ENCODE measurements at regions of chr6 and their contacts with region 1.

Region 1: GRCh38 chr6:72411872-72412708 is 209.8 kb upstream of the KCNQ5 start:
- DNase-seq: peak; percentile 46 to 93 (median 73)
- H3K4me3 ChIP-seq: no peak overlapping the region
- H3K27ac ChIP-seq: no peak overlapping the region
- H3K4me1 ChIP-seq: no peaks in the 10 kb centered on the region
- H3K27me3 ChIP-seq: no peaks in the 10 kb centered on the region
- CTCF ChIP-seq: peak; percentile 99 to 100 (median 100)
- POLR2A ChIP-seq: no peak

Region 2: DNA sequence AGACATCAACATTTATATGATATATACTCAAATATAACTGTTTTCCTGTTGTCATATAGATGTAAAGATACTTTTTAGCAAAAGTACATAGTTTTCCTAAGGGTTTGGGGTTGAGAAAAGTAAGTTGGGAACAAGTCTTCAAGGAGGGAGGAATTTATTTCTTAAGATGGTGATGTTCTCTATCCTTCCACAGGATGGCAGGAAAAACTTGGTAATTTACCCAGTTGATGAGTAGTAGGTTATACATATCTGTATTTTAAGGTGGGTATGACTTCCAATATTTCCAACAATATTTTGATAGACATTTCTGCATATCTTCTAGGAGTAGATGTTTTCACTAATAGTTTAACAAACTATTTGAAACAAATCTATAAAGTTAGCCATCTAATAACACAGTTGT is 271.3 kb before region 1 on chr6:
- intact Hi-C with region 1: no loop called
- DNase-seq: no peak
- H3K4me3 ChIP-seq: no peak overlapping the region
- H3K27ac ChIP-seq: no peak overlapping the region
- H3K4me1 ChIP-seq: no peaks in the 10 kb centered on the region
- H3K27me3 ChIP-seq: no peaks in the 10 kb centered on the region
- CTCF ChIP-seq: no peak
- POLR2A ChIP-seq: no peak

Region 3: DNA sequence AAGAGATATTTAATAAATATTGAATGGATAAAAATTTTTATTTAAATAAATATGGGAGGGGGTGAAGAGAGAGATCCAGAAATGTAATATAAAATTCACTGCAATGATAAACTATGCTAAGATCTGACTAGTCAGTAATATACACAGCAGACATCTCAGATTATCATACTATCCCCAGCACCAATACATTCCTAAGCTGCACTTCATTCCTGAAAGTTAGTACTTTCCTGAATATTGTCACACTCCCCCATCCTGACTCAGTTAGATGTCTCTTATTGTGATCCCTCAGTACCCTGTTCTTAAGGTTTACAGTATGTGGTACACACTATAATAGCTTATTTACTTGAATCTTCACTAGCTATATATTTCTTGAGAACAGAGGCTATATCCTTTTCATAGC is 121.5 kb after region 1 on chr6:
- intact Hi-C with region 1: no loop called
- DNase-seq: no peak
- H3K4me3 ChIP-seq: no peak overlapping the region
- H3K27ac ChIP-seq: no peak overlapping the region
- H3K4me1 ChIP-seq: no peaks in the 10 kb centered on the region
- H3K27me3 ChIP-seq: no peaks in the 10 kb centered on the region
- CTCF ChIP-seq: no peak
- POLR2A ChIP-seq: no peak

Region 4: GRCh38 chr6:73177221-73177944 is 765.3 kb after region 1 on chr6:
- intact Hi-C with region 1: loop called in 1 of 2 experiments (anchors 10 kb)
- DNase-seq: no peak
- H3K4me3 ChIP-seq: no peak overlapping the region
- H3K27ac ChIP-seq: no peak overlapping the region
- H3K4me1 ChIP-seq: no peaks in the 10 kb centered on the region
- H3K27me3 ChIP-seq: no peaks in the 10 kb centered on the region
- CTCF ChIP-seq: no peak
- POLR2A ChIP-seq: no peak

Region 5: DNA sequence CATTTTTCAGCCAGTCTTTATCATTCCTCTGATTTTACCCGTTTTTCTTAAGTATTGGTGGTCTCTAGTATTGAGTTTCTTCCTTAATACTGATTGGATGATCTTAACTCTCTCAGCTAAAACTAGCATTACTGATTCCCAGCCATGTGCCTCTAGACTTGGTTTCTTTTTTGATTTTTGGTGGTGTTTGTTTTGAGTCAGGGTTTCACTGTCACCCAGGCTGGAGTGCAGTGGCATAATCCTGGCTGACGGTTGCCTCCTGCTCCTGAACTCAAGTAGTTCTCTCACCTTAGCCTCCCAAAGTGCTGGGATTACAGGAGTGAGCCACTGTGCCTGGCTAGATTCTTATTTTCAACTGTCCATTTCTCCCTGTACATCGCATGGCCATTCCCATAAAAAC is 917.1 kb after region 1 on chr6:
- intact Hi-C with region 1: loop called in 1 of 2 experiments (anchors 10 kb)
- DNase-seq: no peak
- H3K4me3 ChIP-seq: no peak overlapping the region
- H3K27ac ChIP-seq: no peak overlapping the region
- H3K4me1 ChIP-seq: no peaks in the 10 kb centered on the region
- H3K27me3 ChIP-seq: no peaks in the 10 kb centered on the region
- CTCF ChIP-seq: no peak
- POLR2A ChIP-seq: no peak